Panc1 (cell line): ENCODE measurements at regions of chr2 and their contacts with region 1.

Region 1: GRCh38 chr2:178592655-178593054 is 112.4 kb downstream of the PLEKHA3 start:
- DNase-seq: no peak
- ATAC-seq: no peak
- H3K4me3 ChIP-seq: no peak overlapping the region
- H3K27ac ChIP-seq: no peak overlapping the region
- H3K4me1 ChIP-seq: no peaks in the 10 kb centered on the region
- H3K27me3 ChIP-seq: no peaks in the 10 kb centered on the region
- CTCF ChIP-seq: no peak

Region 2: DNA sequence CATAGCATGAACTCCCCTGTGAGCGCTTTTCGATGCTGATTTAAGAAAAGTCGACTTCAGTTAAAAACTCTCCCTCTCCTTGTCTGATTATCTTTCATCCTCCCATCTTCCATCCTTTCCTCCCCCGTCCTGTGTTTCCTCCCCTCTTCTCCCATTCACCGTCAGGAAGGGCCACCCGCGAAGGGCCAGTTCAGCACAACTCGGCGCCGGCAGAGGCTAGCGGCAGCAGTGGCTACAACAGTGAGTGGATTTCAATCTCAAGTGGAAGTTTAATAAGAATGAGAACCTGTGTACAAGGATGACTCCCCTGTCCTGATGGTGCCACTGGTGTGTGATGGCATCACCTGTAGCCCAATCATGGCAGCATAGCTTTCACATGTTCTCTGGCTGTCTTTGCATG is 248.5 kb before region 1 on chr2:
- CTCF ChIA-PET with region 1: no interaction called
- POLR2A ChIA-PET with region 1: interaction called, 13 read pairs
- in situ Hi-C with region 1: no loop called
- intact Hi-C with region 1: no loop called
- DNase-seq: no peak
- ATAC-seq: no peak
- H3K4me3 ChIP-seq: no peak overlapping the region
- H3K27ac ChIP-seq: no peak overlapping the region
- H3K4me1 ChIP-seq: no peaks in the 10 kb centered on the region
- H3K27me3 ChIP-seq: no peaks in the 10 kb centered on the region; the same call in 1 of the 2 replicates
- CTCF ChIP-seq: no peak